ENCODE measurements at regions of chr19 and their contacts with region 1.

Region 1: DNA sequence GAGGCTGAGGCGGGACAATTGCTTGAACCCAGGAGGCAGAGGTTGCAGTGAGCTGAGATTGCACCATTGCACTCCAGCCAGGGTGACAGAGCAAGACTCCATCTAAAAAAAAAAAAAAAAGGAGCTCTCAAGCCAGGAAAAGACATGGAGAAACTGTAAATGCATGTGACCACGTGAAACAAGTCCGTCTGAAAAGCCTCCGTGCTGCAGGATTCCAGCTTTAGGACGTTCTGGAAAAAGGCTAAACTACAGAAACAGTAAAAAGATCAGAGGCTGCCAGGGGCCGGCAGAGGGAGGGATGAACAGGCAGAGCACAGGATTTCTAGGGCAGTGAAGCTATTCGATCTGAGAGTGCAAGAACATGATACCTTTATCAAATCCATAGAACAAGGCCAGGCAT is 40.7 kb upstream of the NDUFS7 start:
- DNase-seq: no peak
- H3K4me3 ChIP-seq: no peak overlapping the region
- H3K27ac ChIP-seq: no peak overlapping the region
- H3K4me1 ChIP-seq: no peaks in the 10 kb centered on the region
- H3K27me3 ChIP-seq: 0 out of 2 replicates have a peak, but pooled peaks cover 4% of the 10 kb centered on the region
- CTCF ChIP-seq: no peak

Region 2: DNA sequence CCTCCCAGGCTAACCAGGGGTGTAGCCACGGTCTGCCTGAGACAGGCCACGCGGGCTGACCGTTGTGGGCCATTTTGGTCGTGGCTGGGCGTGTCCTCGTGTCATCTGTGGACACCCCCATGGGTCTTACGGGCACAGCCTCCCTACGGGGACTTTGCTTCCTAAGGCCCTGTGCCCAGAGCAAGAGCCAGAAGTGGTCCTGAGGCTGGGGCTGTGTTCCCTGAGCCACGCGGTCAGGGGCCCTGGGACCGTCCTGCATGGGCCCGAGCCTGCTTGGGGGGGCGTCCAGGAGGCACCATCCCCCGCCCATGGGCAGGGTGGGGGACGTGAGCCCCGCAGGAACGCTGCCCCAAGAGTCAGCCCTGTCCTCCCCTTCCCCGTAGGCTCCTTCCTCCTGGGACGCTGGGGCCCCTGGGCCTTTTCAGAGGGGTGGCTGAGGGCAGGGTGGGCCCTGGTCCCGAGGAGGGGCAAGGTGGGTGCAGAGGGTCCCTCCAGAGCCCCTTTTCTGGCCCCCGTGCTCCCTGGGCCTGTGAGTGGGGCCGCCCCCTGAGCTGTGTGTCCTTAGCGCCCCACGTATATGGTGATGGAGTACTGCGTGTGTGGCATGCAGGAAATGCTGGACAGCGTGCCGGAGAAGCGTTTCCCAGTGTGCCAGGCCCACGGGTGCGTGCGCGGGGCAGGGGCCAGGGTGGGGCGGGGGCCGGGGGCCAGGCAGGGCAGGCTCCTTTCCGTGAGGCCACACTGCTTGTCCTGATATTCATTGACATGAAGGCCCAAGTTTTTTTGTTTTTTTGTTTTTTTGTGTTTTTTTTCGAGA is 124.1 kb before region 1 on chr19:
- CTCF ChIA-PET with region 1: no interaction called
- POLR2A ChIA-PET with region 1: interaction called, 11 read pairs
- intact Hi-C with region 1: no loop called
- DNase-seq: no peak
- H3K4me3 ChIP-seq: no peak overlapping the region
- H3K27ac ChIP-seq: no peak overlapping the region
- H3K4me1 ChIP-seq: peaks cover 31% of the 10 kb centered on the region
- H3K27me3 ChIP-seq: no peaks in the 10 kb centered on the region
- CTCF ChIP-seq: no peak